ENCODE measurements at regions of chr1 and their contacts with region 1.

Region 1: DNA sequence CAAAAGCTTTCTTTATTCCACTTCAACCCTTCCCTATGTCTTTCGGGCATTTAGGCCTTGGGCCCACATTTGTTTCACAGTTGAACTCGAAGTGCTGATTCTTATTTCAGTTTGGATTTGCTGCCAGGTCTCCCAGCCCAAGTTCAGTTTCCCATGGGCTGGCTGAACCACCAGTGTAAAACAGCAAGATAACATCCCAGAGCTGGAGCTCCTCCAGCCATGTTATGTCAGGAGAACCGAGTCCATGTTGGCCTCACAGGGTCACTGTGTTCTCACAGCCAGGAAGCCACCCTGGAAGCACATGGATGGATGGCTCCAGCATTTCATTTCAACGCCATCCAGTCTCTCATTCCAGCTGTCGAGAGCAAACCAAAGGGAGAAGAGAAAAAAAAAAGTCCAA is 45.2 kb upstream of the RXRG start:
- DNase-seq: no peak
- H3K4me3 Mint-ChIP-seq: no peak overlapping the region
- H3K27ac Mint-ChIP-seq: no peak overlapping the region
- H3K4me1 Mint-ChIP-seq: peaks cover 2% of the 10 kb centered on the region
- H3K27me3 Mint-ChIP-seq: peaks cover 16% of the 10 kb centered on the region

Region 2: DNA sequence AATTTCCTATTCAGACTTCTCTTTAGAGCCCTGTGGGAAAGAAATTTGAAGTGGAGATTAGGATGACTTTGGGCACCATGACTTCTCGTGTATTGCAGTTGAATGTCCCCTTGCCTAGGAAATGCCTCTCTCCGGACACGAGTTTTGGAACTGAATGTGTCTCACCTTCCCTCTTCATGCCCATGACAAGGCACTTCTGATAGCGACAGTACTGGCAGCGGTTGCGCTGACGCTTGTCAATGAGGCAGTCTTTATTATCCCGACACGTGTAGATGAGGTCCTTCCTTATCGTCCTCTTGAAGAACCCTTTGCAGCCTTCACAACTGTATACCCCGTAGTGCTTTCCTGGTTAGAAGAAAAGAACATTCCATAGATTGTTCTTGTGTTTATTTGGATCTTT is 73.3 kb before region 1 on chr1:
- CTCF ChIA-PET with region 1: no interaction called
- intact Hi-C with region 1: loop called (anchors 5 kb)
- DNase-seq: no peak
- H3K4me3 Mint-ChIP-seq: no peak overlapping the region
- H3K27ac Mint-ChIP-seq: no peak overlapping the region
- H3K4me1 Mint-ChIP-seq: no peaks in the 10 kb centered on the region
- H3K27me3 Mint-ChIP-seq: peaks cover 8% of the 10 kb centered on the region

Region 3: DNA sequence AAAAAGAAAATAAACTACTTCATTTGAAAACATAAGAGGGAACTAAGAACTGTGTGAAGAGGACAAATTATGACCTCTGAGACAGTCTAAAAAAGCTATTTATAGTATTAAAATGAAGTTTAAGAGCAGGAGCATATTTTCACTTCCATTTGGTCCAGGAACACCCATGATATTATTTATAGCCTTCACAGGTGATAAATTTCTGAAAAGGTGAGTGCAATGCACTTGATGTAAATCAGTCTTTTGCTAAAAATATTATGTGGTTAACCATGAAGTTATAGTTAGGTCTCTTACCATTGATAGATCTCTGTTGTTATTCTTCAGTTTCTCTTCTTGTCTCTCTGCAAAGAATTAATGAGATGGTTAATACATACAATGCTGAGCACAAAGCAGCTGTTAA is 263.8 kb after region 1 on chr1:
- CTCF ChIA-PET with region 1: no interaction called
- intact Hi-C with region 1: no loop called
- DNase-seq: no peak
- H3K4me3 Mint-ChIP-seq: no peak overlapping the region
- H3K27ac Mint-ChIP-seq: no peak overlapping the region
- H3K4me1 Mint-ChIP-seq: peaks cover 5% of the 10 kb centered on the region
- H3K27me3 Mint-ChIP-seq: no peaks in the 10 kb centered on the region